ENCODE measurements at regions of chr4 and their contacts with region 1.

Region 1: GRCh38 chr4:17316566-17316965 is 195.3 kb downstream of the QDPR start:
- DNase-seq: no peak
- ATAC-seq: no peak

Region 2: DNA sequence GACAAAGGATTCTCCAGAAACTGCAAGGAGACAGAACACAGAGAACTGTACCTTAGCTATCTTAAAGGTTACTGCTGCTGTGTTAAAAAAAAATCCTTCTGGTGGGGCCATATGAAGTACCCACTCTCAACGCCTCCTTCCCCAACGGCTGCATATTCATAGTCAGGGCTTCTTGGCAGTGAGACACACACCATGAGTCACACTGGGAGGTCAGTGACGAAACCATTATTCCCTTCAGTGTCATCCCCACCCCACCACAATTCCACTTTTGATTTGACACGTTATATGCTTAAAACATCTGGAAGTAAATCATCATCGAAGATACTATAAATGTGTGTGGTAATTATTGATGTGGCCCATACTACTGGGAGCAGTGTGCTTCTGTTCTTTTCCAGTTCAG is 689.6 kb before region 1 on chr4:
- intact Hi-C with region 1: no loop called
- DNase-seq: peak; percentile 53
- ATAC-seq: peak; percentile 76 to 94

Region 3: DNA sequence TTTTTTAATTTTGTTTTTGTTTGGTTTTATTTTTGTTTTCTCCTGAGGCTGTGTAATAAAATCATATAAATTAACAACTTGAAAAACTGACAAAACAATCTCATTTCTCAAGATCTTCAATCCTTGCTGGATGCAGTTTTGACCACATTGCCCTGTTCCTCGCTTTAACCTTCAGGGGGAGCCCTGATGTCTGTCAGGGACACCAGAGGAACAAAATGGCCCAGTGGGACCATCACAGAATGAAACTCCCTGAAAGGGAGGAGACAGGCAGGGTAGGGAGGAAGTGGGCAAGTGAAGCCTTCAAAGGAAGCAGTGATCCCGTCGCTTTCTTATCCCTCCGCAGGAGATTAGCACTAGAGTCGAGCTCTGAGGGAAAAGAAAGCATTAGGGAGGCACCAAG is 143.3 kb before region 1 on chr4:
- intact Hi-C with region 1: loop called in 1 of 2 experiments (anchors 5 kb)
- DNase-seq: no peak
- ATAC-seq: no peak

Region 4: DNA sequence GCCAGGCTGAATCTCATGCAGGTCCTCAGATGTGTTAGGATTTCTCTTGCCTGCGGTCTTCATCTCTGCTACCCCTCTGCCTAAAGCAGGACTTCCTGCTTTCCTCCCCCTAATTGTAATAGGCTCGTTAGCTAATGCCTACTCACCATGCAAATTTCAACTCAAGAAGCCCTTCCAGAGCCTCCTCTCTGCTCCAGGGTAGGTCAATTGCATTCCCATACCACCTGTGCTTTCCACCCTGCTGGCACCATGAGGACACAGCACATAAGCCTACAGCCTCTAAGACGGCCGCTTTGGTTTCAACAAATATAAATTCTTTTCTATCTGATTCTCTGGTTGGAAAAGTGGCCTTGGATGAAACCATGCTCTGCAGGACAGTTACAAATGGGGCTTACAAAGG is 101.4 kb after region 1 on chr4:
- intact Hi-C with region 1: no loop called
- DNase-seq: no peak
- ATAC-seq: no peak

Region 5: GRCh38 chr4:17797808-17798207 is 481.2 kb after region 1 on chr4:
- intact Hi-C with region 1: no loop called
- DNase-seq: no peak
- ATAC-seq: no peak